ENCODE measurements at regions of chr10 and their contacts with region 1.

Region 1: GRCh38 chr10:32445740-32446535 is at the start of gene CCDC7:
- DNase-seq: peak; percentile 90 to 94 (median 91)
- ATAC-seq: peak; percentile 99
- H3K4me3 ChIP-seq: peak within 1 kb of the TSS; percentile 36
- H3K4me1 ChIP-seq: no peaks in the 10 kb centered on the region
- CTCF ChIP-seq: peak; percentile 59
- total RNA-seq, gene CCDC7: 11.2 to 36.5 (median 14.2) TPM

Region 2: DNA sequence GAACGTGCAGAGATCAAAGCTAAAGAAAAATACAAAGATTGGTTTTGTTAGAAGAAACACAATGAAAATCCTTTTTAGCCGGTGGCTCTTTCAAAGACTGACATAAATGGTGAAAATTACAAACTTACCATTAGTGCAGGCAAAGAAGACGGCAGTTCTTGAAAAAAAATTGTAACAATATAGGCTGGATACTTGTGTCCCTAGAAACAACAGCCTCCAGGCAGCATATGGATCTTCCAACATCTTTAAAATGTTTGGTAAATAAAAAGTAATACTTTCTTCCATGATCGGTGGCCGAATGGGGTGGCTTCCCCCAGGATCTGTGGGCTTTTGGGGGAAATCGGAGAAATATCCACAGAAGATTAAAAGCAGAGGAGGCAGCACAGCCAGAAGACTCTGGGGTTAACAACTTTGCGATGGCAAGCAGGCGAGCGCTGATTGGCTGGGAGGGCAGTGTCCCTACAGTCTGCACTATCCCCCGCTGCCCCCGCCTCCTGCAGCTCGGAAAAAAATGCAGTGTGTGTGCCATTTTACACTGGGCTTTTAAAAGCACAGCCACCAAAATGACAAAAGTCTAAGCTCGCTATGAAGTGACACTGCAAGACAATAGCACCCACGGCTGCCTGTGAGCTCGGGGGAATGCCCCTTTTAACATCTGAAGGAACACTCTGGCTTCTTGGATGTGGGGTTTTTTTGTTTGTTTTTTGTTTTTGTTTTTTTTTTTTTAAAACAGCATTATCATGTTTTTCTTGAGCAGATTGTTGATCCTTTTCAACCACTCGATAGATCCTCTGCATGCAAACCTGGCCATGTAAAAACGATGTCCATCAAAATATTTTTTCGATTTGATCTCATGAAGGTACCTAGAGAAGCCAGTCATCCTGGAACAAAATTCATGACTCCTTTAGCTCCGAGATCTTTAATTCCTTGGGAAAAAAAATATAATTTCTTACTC is 67.3 kb before region 1 on chr10:
- intact Hi-C with region 1: loop called (anchors 5 to 10 kb)
- DNase-seq: peak; percentile 95 to 98 (median 97)
- ATAC-seq: peak; percentile 96
- H3K4me3 ChIP-seq: peak overlapping the region; percentile 50
- H3K4me1 ChIP-seq: peaks cover 12% of the 10 kb centered on the region
- CTCF ChIP-seq: no peak

Region 3: DNA sequence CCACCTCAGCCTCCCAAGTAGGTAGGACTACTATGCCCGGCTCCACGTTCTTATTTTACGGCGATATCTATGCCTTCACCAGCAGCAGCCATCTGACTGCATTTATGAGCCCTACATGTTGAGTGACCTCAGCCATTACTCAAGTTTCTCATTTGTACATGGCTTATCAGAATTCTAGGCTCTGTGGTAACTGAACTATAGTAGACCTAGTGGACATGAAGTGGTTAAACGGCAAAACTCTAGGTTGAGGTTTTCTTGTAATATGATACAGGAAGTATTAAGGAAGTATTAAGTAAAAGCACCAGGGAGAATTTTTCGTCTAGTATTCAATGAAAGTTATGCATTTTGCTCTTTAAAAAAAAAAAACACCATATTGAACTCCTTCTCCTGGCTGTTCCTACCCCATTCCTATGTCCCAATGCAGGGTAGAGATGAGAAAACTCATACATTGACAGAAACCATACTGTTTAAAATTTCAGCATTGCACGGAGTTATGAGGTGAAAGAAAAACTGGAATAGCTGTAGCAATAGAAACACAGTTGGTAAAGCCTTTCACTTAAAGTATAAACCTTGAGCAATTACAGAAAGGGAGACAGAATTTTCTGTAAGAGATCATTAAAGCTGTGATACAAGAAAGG is 59.2 kb before region 1 on chr10:
- intact Hi-C with region 1: loop called in 1 of 2 experiments (anchors 10 kb)
- DNase-seq: no peak
- ATAC-seq: no peak
- H3K4me3 ChIP-seq: no peak overlapping the region
- H3K4me1 ChIP-seq: no peaks in the 10 kb centered on the region
- CTCF ChIP-seq: no peak

Region 4: DNA sequence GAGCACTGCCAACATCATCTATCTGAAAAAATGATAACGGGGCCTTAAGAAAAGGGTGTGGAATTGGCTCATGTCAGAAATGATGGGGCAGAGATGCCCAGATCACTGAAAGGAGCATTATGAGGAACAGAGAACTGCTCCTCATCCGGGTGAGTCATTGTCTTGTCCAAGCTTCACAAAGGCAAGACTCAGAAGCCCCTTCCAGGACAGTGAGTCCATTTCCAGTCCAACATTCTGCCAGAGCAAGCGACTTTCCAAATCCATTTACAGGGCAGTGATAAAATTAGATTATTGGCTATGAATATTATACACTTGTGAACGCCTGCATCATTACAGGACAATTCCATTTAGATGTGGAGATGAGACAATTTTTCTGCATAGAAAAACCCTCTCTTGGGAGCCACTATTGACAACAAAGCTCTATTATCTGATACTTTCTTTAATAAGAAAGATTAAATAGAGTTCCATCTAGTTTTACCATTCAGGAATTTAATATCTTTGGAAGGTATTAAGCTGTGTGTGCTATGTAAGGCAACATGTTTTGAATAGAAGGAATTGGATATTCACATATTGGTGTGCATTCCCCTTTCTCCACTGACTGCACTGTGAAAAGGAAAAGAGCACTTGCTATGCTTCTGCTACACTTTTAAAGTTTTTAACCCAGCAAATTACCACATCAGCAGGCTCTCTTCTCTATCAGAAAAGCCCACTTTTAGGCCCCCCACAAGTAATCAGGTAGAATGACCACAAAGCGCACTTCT is 728.9 kb after region 1 on chr10:
- intact Hi-C with region 1: no loop called
- DNase-seq: no peak
- ATAC-seq: no peak
- H3K4me3 ChIP-seq: no peak overlapping the region
- H3K4me1 ChIP-seq: no peaks in the 10 kb centered on the region
- CTCF ChIP-seq: no peak